ENCODE measurements at regions of chr21 and their contacts with region 1.

Region 1: GRCh38 chr21:37463083-37463801 is 96.7 kb downstream of the DYRK1A start:
- DNase-seq: peak; percentile 71
- H3K4me3 ChIP-seq: peak overlapping the region in 1 of 3 experiments; percentile 14
- H3K27ac ChIP-seq: peak overlapping the region; percentile 2
- H3K4me1 ChIP-seq: peaks cover 10% of the 10 kb centered on the region
- H3K27me3 ChIP-seq: no peaks in the 10 kb centered on the region
- CTCF ChIP-seq: peak; percentile 44 to 61
- POLR2A ChIP-seq: no peak

Region 2: GRCh38 chr21:37452227-37452626 is 11.0 kb before region 1 on chr21:
- CTCF ChIA-PET with region 1: interaction called, 12 read pairs
- POLR2A ChIA-PET with region 1: no interaction called
- dilution Hi-C with region 1: no loop called
- intact Hi-C with region 1: no loop called
- DNase-seq: peak; percentile 35
- H3K4me3 ChIP-seq: no peak overlapping the region
- H3K27ac ChIP-seq: no peak overlapping the region
- H3K4me1 ChIP-seq: peaks cover 38% of the 10 kb centered on the region
- H3K27me3 ChIP-seq: no peaks in the 10 kb centered on the region
- CTCF ChIP-seq: no peak
- POLR2A ChIP-seq: no peak

Region 3: GRCh38 chr21:37496972-37497371 is 33.7 kb after region 1 on chr21:
- CTCF ChIA-PET with region 1: interaction called, 10 read pairs
- POLR2A ChIA-PET with region 1: no interaction called
- dilution Hi-C with region 1: no loop called
- intact Hi-C with region 1: no loop called
- DNase-seq: peak; percentile 36
- H3K4me3 ChIP-seq: no peak overlapping the region
- H3K27ac ChIP-seq: no peak overlapping the region
- H3K4me1 ChIP-seq: no peaks in the 10 kb centered on the region
- H3K27me3 ChIP-seq: no peaks in the 10 kb centered on the region
- CTCF ChIP-seq: peak in 1 of 2 donors; percentile 6
- POLR2A ChIP-seq: no peak

Region 4: GRCh38 chr21:37582590-37582989 is 119.3 kb after region 1 on chr21:
- CTCF ChIA-PET with region 1: interaction called, 7 read pairs
- POLR2A ChIA-PET with region 1: no interaction called
- dilution Hi-C with region 1: no loop called
- intact Hi-C with region 1: loop called (anchors 1 kb)
- DNase-seq: peak; percentile 69
- H3K4me3 ChIP-seq: no peak overlapping the region
- H3K27ac ChIP-seq: no peak overlapping the region
- H3K4me1 ChIP-seq: peaks cover 13% of the 10 kb centered on the region
- H3K27me3 ChIP-seq: no peaks in the 10 kb centered on the region
- CTCF ChIP-seq: peak; percentile 68 to 76
- POLR2A ChIP-seq: no peak

Measured in endothelial cell of umbilical vein (primary cell).